Activated T-helper 1 cell treated with anti-CD3 and anti-CD28 coated beads, Interleukin-12 subunit alpha, Interleukin-12 subunit beta, Interleukin-2, Interleukin-4 antibody, amounts not matched to agents 30 ng/mL and 10 ng/mL and 1 ng/mL, durations not matched to agents 14 hours and 24 hours and 36 hours (primary cell): ENCODE measurements at regions of chr6 and their contacts with region 1.

Region 1: GRCh38 chr6:99613409-99613704 is 6.7 kb downstream of the PRDM13 start:
- DNase-seq: no peak
- H3K4me3 Mint-ChIP-seq: no peak overlapping the region
- H3K27ac Mint-ChIP-seq: no peak overlapping the region
- H3K4me1 Mint-ChIP-seq: peaks cover 30% of the 10 kb centered on the region
- H3K27me3 Mint-ChIP-seq: peaks cover 70% of the 10 kb centered on the region

Region 2: GRCh38 chr6:98880486-98880885 is 732.9 kb before region 1 on chr6:
- intact Hi-C with region 1: no loop called
- DNase-seq: no peak
- H3K4me3 Mint-ChIP-seq: no peak overlapping the region
- H3K27ac Mint-ChIP-seq: no peak overlapping the region
- H3K4me1 Mint-ChIP-seq: peaks cover 12% of the 10 kb centered on the region
- H3K27me3 Mint-ChIP-seq: no peaks in the 10 kb centered on the region

Region 3: DNA sequence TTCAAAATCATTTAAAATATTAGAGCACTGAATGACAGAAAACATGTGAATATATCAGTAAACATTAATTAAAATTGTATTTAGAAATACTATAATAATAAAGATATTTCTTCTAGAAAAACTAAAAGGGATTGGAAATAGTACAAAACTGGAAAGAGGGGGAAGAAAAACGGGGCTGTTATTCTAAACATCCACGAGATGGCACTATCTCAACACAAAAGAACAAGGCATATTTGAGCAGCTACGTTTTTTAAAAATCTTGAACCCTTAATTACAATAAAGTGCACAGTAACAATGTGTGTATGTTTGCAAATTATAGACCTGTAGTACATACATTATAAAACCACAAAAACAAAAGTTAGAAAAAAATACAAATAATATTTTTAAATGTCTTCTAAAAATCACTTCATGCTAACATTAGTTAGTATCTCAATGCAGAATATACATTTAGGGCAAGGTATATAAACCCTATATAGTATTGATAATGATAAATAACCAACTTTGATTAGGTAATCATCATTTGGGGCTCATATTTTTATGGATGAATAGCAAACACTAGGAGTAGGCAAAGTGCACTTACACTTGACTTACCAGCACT is 145.7 kb before region 1 on chr6:
- intact Hi-C with region 1: loop called (anchors 5 kb)
- DNase-seq: no peak
- H3K4me3 Mint-ChIP-seq: no peak overlapping the region
- H3K27ac Mint-ChIP-seq: no peak overlapping the region
- H3K4me1 Mint-ChIP-seq: no peaks in the 10 kb centered on the region
- H3K27me3 Mint-ChIP-seq: no peaks in the 10 kb centered on the region

Region 4: DNA sequence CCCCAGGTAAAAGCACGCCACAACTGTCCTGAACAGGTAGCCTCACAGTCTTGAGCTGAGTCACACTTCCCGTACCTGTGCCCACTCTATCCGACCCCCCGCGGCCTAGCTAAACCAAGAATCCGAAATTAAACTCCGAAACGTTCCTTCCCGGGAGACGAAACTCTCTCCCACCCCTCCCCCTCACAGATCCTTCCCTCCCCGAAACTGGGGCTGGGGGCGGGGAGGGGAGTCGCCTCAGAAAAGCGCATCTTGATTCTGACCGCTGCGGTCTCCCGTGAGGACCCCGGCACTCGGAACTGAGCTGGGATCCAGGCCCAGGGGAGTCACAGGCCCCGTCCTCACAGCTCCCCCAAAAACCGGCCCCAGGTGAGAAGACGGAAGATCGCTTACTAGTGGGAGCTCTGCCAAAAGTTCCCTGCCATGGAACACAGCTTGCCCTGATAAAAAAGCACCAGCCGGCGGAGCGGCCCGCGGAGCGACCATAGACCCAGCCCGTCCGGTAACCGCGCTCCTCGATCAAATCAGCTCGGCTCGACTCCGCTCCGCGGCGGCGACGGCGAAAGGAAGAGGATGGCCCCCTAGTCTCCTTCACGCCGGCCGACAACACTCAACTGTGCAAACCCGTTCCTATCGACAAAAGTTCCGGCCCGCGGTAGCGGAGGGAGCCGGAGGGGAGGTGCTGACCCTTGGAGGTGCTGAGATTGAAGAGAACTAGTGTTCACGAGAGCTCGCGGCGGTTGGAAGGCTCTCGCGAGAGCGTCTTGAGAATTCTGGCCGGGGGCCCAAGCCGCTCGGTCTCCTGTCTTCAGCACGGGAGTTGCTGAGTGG is 45.0 kb before region 1 on chr6 and contains the start of gene CCNC:
- intact Hi-C with region 1: loop called (anchors 2 kb)
- DNase-seq: peak; percentile 85
- H3K4me3 Mint-ChIP-seq: peak within 1 kb of the TSS; percentile 99
- H3K27ac Mint-ChIP-seq: peak within 1 kb of the TSS; percentile 95
- H3K4me1 Mint-ChIP-seq: peaks cover 37% of the 10 kb centered on the region
- H3K27me3 Mint-ChIP-seq: no peaks in the 10 kb centered on the region
- total RNA-seq, gene CCNC: 51.3 and 54.0 TPM in 2 replicates

Region 5: GRCh38 chr6:99661870-99662269 is 48.5 kb after region 1 on chr6:
- intact Hi-C with region 1: no loop called
- DNase-seq: no peak
- H3K4me3 Mint-ChIP-seq: no peak overlapping the region
- H3K27ac Mint-ChIP-seq: no peak overlapping the region
- H3K4me1 Mint-ChIP-seq: no peaks in the 10 kb centered on the region
- H3K27me3 Mint-ChIP-seq: peaks cover 9% of the 10 kb centered on the region

Region 6: GRCh38 chr6:100464903-100465700 is 851.7 kb after region 1 on chr6 and contains the start of gene SIM1:
- intact Hi-C with region 1: loop called (anchors 1 kb)
- DNase-seq: no peak
- H3K4me3 Mint-ChIP-seq: no peak within 1 kb of the TSS
- H3K27ac Mint-ChIP-seq: peak within 1 kb of the TSS; percentile 67
- H3K4me1 Mint-ChIP-seq: peaks cover 12% of the 10 kb centered on the region
- H3K27me3 Mint-ChIP-seq: peaks cover 84% of the 10 kb centered on the region
- total RNA-seq, gene SIM1: 0.02 and 0.13 TPM in 2 replicates